ENCODE measurements at regions of chr17 and their contacts with region 1.

Region 1: DNA sequence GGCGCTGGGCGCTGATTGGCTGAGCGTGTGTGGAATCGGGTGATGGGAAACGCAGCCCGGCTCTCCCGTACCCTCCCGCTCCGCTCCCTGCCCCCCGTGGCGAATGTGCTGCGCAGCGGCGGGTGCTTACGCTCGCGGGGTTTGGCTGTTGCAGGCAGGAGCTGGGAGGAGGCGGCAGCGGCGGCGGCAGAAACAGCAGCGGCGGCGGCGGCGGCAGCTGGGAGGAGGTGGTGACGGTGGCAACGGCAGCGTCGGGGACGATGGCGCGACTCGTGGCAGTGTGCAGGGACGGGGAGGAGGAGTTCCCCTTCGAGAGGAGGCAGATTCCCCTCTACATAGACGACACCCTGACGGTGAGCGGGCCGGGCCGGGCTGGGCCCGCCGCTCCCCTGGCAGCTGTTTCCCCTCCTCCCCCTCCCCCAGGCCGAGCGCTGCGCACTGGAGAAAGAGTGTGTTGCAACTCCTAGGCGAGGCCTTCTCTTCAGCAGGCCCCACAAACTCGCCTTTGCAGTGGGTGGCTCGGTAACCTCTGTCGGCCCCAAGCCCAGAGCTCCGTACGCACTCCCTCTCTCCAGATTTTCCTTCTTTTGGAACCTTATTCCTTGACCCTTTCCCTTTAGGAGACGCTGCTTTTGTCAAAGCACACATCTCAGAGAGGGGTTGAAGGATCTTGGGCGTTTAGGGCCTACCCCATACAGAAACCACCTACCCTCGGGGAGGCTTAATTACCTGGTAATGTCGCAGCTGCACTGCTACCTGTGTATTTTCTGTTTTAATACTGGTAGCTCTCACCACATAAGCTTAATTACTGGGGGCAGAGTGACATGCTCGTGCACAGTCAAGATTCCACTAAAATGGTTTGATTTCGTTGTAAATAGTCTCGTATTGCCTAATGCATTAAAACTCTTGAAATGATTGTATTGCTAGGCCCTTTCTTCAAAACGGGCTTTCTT is 1.0 kb downstream of the GGNBP2 start:
- DNase-seq: peak; percentile 97

Region 2: DNA sequence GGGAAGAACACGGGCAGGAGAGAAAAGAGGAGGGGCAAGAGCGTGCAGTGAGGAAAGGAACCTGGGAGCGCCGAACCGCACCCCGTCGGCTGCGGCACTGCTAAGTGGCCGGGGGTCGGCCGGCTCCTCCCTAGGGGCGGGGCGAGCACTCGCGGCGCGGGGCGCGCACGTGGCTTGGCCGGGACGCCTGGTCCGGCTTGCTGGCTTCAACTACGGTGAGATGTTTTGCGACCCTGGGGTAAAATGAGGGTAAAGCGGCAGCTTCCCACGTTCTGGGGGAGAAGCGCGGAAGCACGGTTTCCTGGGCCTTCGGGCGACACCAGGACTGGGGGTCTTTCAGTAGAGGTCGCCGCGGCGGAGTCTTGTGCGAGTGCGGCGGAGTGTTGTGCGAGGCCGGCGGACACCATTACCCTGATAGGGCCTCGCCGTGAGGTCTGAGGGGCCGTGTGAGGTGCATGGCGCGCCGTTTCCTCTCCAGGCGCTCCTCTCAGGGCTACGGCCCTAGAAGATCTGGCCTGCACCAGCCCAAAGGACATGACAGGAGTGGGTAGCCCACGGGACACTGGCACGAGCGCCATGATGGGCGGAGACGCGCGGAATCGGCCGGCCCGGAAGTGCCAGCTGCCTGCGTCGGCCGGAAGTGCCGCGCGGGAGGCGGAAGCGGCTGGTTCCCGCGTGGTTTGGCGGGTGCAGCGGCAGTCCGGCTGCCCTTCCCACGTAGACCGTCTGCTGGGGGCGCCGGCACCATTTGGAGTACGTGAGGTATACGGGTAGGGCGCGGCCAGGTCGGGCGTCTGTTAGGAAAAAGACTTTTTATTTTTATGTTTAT is 10.7 kb before region 1 on chr17 and contains the starts of genes MYO19 and PIGW:
- intact Hi-C with region 1: loop called (anchors 1 kb)
- DNase-seq: peak; percentile 93
- total RNA-seq, gene MYO19: 16.0 TPM
- total RNA-seq, gene PIGW: 4.3 TPM

Region 3: DNA sequence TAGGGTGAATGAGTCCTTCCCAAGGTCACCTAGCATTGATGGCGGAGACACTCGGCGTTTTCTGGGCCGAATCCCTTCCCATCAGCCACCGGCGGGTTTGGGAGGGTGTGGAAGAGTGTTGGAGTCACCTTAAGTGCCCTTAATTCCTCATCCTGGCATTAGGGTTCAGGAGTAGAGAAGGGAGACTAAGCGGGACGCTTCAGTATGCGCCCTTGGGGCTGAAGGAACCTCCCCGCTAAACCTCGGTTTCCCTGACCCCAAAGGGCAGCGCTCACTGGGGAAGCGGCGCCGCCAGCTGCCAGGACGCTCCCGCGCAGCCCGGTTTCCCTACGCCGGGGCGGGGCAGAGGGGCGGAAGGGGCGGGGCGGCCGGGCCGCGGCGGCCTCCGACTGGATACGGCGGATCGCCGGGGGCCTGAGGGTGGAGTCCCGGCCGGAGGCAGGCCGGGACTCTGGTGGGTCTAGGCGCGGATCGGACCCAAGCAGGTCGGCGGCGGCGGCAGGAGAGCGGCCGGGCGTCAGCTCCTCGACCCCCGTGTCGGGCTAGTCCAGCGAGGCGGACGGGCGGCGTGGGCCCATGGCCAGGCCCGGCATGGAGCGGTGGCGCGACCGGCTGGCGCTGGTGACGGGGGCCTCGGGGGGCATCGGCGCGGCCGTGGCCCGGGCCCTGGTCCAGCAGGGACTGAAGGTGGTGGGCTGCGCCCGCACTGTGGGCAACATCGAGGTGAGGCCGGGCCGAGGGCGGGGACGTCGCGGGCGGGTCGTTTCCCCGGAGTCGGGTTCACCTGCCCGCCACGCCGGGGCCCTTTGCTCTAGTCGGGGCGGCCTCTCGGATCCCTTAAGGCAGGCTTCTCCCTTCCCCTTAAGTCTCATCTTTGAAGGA is 45.9 kb after region 1 on chr17 and contains the start of gene DHRS11:
- intact Hi-C with region 1: loop called (anchors 5 kb)
- DNase-seq: peak; percentile 92
- total RNA-seq, gene DHRS11: 15.3 TPM

Region 4: GRCh38 chr17:36602924-36603384 is 57.2 kb after region 1 on chr17:
- intact Hi-C with region 1: no loop called
- DNase-seq: peak; percentile 50